Activated B cell treated with CpG ODN at 0.5 μM for 24 hours (primary cell): ENCODE measurements at regions of chr7 and their contacts with region 1.

Region 1: GRCh38 chr7:42479816-42480633 is 243.0 kb upstream of the GLI3 start:
- DNase-seq: no peak
- ATAC-seq: no peak
- H3K4me3 Mint-ChIP-seq: no peak overlapping the region
- H3K27ac Mint-ChIP-seq: no peak overlapping the region
- H3K4me1 Mint-ChIP-seq: no peaks in the 10 kb centered on the region
- H3K27me3 Mint-ChIP-seq: no peaks in the 10 kb centered on the region
- CTCF ChIP-seq: no peak

Region 2: GRCh38 chr7:42549866-42550485 is 70.0 kb after region 1 on chr7:
- CTCF ChIA-PET with region 1: no interaction called
- POLR2A ChIA-PET with region 1: no interaction called
- intact Hi-C with region 1: loop called (anchors 10 kb)
- DNase-seq: no peak
- ATAC-seq: no peak
- H3K4me3 Mint-ChIP-seq: no peak overlapping the region
- H3K27ac Mint-ChIP-seq: no peak overlapping the region
- H3K4me1 Mint-ChIP-seq: no peaks in the 10 kb centered on the region
- H3K27me3 Mint-ChIP-seq: no peaks in the 10 kb centered on the region
- CTCF ChIP-seq: no peak

Region 3: DNA sequence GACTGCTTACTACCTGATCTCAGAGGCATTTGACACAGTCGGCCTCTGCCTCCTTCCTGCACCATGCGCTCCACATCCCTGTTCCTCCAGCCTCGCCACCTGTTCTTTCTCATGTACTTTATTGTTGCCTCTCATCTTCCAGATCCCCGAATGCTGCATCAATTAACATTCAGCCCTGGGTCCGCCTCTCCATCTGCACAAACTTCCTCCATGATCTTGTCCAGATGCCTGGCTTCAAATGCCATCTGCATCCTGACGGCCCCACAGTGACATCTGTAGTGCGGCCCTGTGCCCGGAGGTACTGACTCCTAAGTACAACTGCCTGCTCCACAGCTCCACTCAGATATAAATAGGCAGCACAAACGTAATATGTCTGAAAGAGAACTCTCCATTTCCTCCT is 1051.7 kb after region 1 on chr7:
- CTCF ChIA-PET with region 1: no interaction called
- POLR2A ChIA-PET with region 1: no interaction called
- intact Hi-C with region 1: no loop called
- DNase-seq: no peak
- ATAC-seq: no peak
- H3K4me3 Mint-ChIP-seq: no peak overlapping the region
- H3K27ac Mint-ChIP-seq: no peak overlapping the region
- H3K4me1 Mint-ChIP-seq: no peaks in the 10 kb centered on the region
- H3K27me3 Mint-ChIP-seq: peaks cover 8% of the 10 kb centered on the region
- CTCF ChIP-seq: no peak

Region 4: GRCh38 chr7:43764039-43764761 is 1284.2 kb after region 1 on chr7:
- CTCF ChIA-PET with region 1: no interaction called
- POLR2A ChIA-PET with region 1: no interaction called
- intact Hi-C with region 1: no loop called
- DNase-seq: no peak
- ATAC-seq: peak; percentile 76
- H3K4me3 Mint-ChIP-seq: peak overlapping the region; percentile 70
- H3K27ac Mint-ChIP-seq: no peak overlapping the region
- H3K4me1 Mint-ChIP-seq: peaks cover 23% of the 10 kb centered on the region
- H3K27me3 Mint-ChIP-seq: no peaks in the 10 kb centered on the region
- CTCF ChIP-seq: no peak